GM12878 (cell line): ENCODE measurements at regions of chr10 and their contacts with region 1.

Region 1: DNA sequence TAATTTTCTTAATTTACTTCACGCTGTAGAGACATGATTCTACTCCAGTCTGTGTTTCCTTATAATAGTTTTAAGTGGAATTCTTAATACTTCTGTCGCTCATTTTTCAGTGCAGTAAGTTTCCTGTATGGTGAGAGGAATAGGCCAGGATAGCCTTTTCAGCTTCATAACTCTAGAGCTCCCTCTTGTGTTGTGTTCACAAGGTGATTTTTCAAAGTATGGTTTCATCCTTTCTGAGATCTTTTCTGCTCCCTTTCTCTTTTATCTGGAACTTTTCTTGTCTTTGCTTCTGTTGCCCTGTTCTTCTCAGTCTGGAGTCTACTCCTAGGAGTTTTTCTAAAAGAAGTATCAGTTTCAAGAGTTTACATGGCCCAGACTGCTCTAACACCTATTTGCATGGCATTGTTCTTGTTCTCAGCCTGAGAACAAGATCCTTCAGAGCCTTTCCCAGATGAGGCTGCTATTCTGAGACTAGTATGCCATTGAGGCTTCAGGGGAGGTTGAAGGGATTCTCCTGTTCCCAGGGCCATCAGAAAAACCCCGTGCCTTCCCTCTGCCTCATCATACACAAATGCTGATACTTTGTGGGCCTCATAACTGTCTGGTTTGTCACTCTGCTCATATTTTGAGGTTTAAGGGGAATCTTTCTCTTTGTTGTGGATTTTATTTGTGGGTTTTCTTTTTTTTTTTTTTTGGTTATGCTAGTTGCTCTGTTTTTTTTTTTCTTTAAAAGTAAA is 21.8 kb downstream of the NET1 start:
- DNase-seq: no peak
- ATAC-seq: peak; percentile 85
- H3K4me3 ChIP-seq: no peak overlapping the region
- H3K27ac ChIP-seq: no peak overlapping the region
- H3K4me1 ChIP-seq: no peaks in the 10 kb centered on the region
- H3K27me3 ChIP-seq: no peaks in the 10 kb centered on the region
- CTCF ChIP-seq: peak; percentile 57 to 70 (median 64); a peak in 5 of 6 replicates
- EP300 ChIP-seq: peak in 1 of 2 experiments; percentile 14; a peak in 1 of 4 replicates
- POLR2A ChIP-seq: no peak
- RAD21 ChIP-seq: peak; percentile 64

Region 2: GRCh38 chr10:4813023-4813422 is 621.2 kb before region 1 on chr10:
- CTCF ChIA-PET with region 1: interaction called, 40 read pairs
- POLR2A ChIA-PET with region 1: no interaction called
- RAD21 ChIA-PET with region 1: interaction called, 25 read pairs
- SMC1A ChIA-PET with region 1: interaction called, 31 read pairs
- in situ Hi-C with region 1: no loop called
- intact Hi-C with region 1: loop called (anchors 5 kb)
- DNase-seq: no peak
- ATAC-seq: no peak
- H3K4me3 ChIP-seq: no peak overlapping the region
- H3K27ac ChIP-seq: no peak overlapping the region
- H3K4me1 ChIP-seq: no peaks in the 10 kb centered on the region
- H3K27me3 ChIP-seq: peaks cover 0 to 2% of the 10 kb centered on the region in 2 experiments; a peak in 1 of 4 replicates
- CTCF ChIP-seq: no peak
- EP300 ChIP-seq: no peak
- POLR2A ChIP-seq: no peak
- RAD21 ChIP-seq: no peak

Region 3: GRCh38 chr10:4849555-4850242 is 584.5 kb before region 1 on chr10:
- CTCF ChIA-PET with region 1: interaction called, 56 read pairs
- POLR2A ChIA-PET with region 1: no interaction called
- RAD21 ChIA-PET with region 1: interaction called, 18 read pairs
- SMC1A ChIA-PET with region 1: interaction called, 28 read pairs
- in situ Hi-C with region 1: no loop called
- intact Hi-C with region 1: loop called (anchors 2 kb)
- DNase-seq: peak; percentile 37
- ATAC-seq: peak; percentile 97
- H3K4me3 ChIP-seq: no peak overlapping the region
- H3K27ac ChIP-seq: no peak overlapping the region
- H3K4me1 ChIP-seq: no peaks in the 10 kb centered on the region; the same call in 1 of the 2 replicates
- H3K27me3 ChIP-seq: no peaks in the 10 kb centered on the region
- CTCF ChIP-seq: peak; percentile 84 to 100 (median 99); a peak in 5 of 6 replicates
- EP300 ChIP-seq: peak in 1 of 2 experiments; percentile 12; a peak in 1 of 4 replicates
- POLR2A ChIP-seq: no peak
- RAD21 ChIP-seq: peak; percentile 81

Region 4: GRCh38 chr10:5023177-5023805 is 410.9 kb before region 1 on chr10:
- CTCF ChIA-PET with region 1: no interaction called
- POLR2A ChIA-PET with region 1: no interaction called
- RAD21 ChIA-PET with region 1: no interaction called
- SMC1A ChIA-PET with region 1: no interaction called
- in situ Hi-C with region 1: no loop called
- intact Hi-C with region 1: no loop called
- DNase-seq: no peak
- ATAC-seq: no peak
- H3K4me3 ChIP-seq: no peak overlapping the region
- H3K27ac ChIP-seq: no peak overlapping the region
- H3K4me1 ChIP-seq: no peaks in the 10 kb centered on the region
- H3K27me3 ChIP-seq: no peaks in the 10 kb centered on the region
- CTCF ChIP-seq: no peak
- EP300 ChIP-seq: no peak
- POLR2A ChIP-seq: no peak
- RAD21 ChIP-seq: no peak

Region 5: GRCh38 chr10:5206799-5207198 is 227.4 kb before region 1 on chr10:
- CTCF ChIA-PET with region 1: no interaction called
- POLR2A ChIA-PET with region 1: no interaction called
- RAD21 ChIA-PET with region 1: no interaction called
- SMC1A ChIA-PET with region 1: no interaction called
- in situ Hi-C with region 1: no loop called
- intact Hi-C with region 1: no loop called
- DNase-seq: no peak
- ATAC-seq: no peak
- H3K4me3 ChIP-seq: no peak overlapping the region
- H3K27ac ChIP-seq: no peak overlapping the region
- H3K4me1 ChIP-seq: no peaks in the 10 kb centered on the region
- H3K27me3 ChIP-seq: no peaks in the 10 kb centered on the region
- CTCF ChIP-seq: no peak
- EP300 ChIP-seq: no peak
- POLR2A ChIP-seq: no peak
- RAD21 ChIP-seq: no peak

Region 6: DNA sequence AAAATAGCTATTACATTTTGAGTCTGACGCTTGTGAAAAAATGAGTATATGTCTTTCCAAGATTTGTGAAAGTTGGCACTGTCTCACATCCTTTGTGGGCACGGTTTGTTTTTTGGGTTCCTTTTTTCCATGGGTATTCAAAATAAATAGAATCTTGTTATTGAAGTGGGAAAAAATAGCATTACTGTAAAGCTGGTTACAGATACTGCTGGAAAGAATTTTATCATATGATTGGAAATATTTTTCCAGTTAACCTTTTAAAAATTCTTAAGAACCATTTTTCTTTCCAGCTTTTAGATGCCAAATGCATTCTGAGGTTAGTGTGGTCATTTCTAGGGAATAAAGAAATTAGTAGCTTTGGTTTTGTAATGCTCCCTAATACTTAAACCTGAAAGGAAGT is 10.4 kb before region 1 on chr10:
- CTCF ChIA-PET with region 1: interaction called, 60 read pairs
- POLR2A ChIA-PET with region 1: no interaction called
- RAD21 ChIA-PET with region 1: interaction called, 4 read pairs
- SMC1A ChIA-PET with region 1: interaction called, 12 read pairs
- in situ Hi-C with region 1: no loop called
- intact Hi-C with region 1: no loop called
- DNase-seq: no peak
- ATAC-seq: no peak
- H3K4me3 ChIP-seq: no peak overlapping the region
- H3K27ac ChIP-seq: no peak overlapping the region
- H3K4me1 ChIP-seq: no peaks in the 10 kb centered on the region
- H3K27me3 ChIP-seq: no peaks in the 10 kb centered on the region
- CTCF ChIP-seq: no peak
- EP300 ChIP-seq: no peak
- POLR2A ChIP-seq: no peak
- RAD21 ChIP-seq: no peak

Region 7: DNA sequence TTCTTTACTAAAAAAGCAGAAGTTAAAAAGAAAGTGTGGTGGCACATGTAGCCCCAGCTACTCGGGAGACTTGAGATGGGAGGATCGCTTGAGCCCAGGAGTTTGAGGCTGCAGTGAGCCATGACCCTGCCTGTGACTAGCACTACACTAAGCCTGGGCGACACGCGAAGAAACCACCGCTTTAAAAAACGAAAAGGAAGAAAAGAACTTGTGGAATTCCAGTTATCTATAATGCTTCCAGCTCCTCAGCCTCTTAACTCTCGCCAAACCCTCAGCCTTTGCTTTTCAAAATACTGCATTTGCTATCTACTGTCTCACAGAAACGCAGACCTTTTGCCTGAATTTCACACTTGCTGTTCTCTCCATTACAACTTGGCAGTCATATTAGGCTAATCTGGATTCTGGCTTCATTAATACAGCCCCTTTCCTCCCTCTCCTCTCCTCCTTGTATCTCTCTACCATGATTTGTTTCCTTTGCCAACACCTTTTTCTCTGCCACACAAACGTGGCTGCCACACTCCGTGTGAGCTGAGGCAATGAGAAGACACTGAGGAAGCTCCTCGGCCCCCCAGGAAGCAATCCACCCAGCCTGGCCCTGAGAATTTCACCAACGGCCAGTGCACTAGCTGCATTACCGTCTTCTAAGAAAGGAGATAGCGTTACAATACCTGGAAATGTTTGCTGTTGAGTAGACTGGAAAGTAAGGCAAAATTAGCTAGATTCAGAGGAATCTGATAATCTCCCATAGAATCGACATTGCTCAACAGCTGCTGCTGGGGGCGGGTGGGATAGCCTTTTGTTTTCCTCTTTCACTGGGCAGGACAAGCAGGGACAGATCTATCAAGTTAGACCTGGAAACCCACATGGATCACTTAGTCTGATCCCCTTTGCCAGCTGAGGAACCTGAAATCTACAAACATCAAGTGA is 28.0 kb after region 1 on chr10:
- CTCF ChIA-PET with region 1: interaction called, 13 read pairs
- POLR2A ChIA-PET with region 1: no interaction called
- RAD21 ChIA-PET with region 1: no interaction called
- SMC1A ChIA-PET with region 1: no interaction called
- in situ Hi-C with region 1: no loop called
- intact Hi-C with region 1: no loop called
- DNase-seq: no peak
- ATAC-seq: no peak
- H3K4me3 ChIP-seq: no peak overlapping the region
- H3K27ac ChIP-seq: no peak overlapping the region
- H3K4me1 ChIP-seq: no peaks in the 10 kb centered on the region
- H3K27me3 ChIP-seq: no peaks in the 10 kb centered on the region
- CTCF ChIP-seq: no peak
- EP300 ChIP-seq: no peak
- POLR2A ChIP-seq: no peak
- RAD21 ChIP-seq: no peak

Region 8: DNA sequence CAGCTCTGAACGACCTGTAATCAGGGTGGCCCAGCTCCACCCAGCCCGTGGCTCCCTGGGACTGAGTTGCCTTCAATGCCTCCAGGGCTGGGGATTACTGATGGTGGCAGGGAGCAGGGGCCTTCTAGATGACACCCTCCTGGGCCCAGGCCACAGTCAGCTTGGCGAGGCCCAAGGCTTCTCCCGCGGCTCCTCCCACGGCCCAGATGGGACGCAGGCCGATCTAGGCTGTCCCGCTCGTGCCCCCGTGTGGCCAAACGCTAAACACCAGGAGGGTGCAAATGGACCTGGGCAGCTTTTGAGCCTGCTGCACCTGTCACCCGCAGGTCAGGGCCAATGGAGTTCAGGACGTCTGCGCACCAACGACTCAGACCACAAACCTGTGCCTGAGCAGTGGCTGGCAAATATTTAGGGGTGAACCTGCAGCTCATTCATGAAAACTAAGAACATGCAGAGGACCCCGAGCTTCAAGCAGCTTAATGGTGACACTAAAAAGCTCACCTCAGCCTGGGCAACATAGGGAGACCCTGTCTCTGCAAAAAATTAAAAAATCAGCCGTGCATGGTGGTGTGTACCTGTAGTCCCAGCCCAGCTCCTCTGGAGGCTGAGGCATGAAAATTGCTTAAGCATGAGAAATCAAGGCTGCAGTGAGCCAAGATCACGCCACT is 189.0 kb after region 1 on chr10:
- CTCF ChIA-PET with region 1: interaction called, 535 read pairs
- POLR2A ChIA-PET with region 1: no interaction called
- RAD21 ChIA-PET with region 1: interaction called, 136 read pairs
- SMC1A ChIA-PET with region 1: interaction called, 129 read pairs
- in situ Hi-C with region 1: no loop called
- intact Hi-C with region 1: no loop called
- DNase-seq: peak; percentile 23
- ATAC-seq: peak; percentile 99
- H3K4me3 ChIP-seq: no peak overlapping the region
- H3K27ac ChIP-seq: no peak overlapping the region
- H3K4me1 ChIP-seq: no peaks in the 10 kb centered on the region
- H3K27me3 ChIP-seq: peaks cover 2 to 9% of the 10 kb centered on the region in 2 experiments; a peak in 3 of 4 replicates
- CTCF ChIP-seq: peak; percentile 87 to 93 (median 89)
- EP300 ChIP-seq: no peak
- POLR2A ChIP-seq: no peak
- RAD21 ChIP-seq: peak; percentile 91